Activated naive CD4-positive, alpha-beta T cell treated with anti-CD3 and anti-CD28 coated beads for 36 hours (primary cell): ENCODE measurements at regions of chr11 and their contacts with region 1.

Region 1: DNA sequence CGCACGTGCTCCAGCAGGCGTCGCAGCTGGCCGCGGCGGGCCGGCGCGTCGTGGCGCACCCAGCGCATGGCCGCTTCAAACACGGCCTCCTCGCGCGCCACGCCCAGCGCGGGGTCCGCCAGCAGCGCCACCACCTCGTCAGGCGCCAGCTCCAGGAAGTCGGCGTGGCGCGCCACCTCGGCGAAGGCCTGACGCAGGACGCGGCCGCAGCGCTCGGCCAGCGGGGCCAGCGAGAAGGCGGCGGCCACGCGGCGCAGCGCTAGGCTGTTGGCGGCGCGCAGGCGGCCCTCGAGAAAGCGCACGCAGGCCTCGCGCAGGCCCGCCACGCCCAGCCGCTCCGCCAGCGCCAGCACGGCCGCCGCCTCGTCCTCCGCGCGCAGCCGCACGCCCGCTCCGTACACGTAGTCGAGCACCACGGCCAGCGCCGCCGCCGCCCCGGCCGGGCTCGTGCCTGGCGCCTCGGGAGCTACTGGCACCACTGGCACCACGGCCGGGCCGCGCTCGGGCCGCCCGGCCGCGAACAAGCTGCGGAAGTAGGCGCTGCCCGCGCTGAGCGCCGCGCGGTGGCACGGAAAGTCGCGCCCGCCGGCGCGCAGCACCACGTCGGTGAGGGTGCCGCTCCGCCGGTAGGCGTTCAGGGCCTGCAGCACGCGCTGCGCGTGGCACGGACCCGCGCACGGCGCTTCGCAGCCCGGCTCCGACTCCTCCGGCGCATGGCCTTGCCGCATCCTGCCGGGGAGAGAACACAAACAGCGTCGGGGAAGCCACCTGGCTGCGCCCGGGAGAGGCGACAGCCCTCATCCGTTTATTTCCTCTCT is 2.9 kb downstream of the KLHL35 start:
- DNase-seq: peak; percentile 46
- H3K4me3 Mint-ChIP-seq: peak overlapping the region; percentile 67
- H3K27ac Mint-ChIP-seq: no peak overlapping the region
- H3K4me1 Mint-ChIP-seq: peaks cover 13% of the 10 kb centered on the region
- H3K27me3 Mint-ChIP-seq: peaks cover 42% of the 10 kb centered on the region

Region 2: GRCh38 chr11:75399344-75400145 is 30.6 kb before region 1 on chr11 and contains the start of gene RPS3:
- CTCF ChIA-PET with region 1: no interaction called
- intact Hi-C with region 1: loop called (anchors 5 kb)
- DNase-seq: peak; percentile 90
- H3K4me3 Mint-ChIP-seq: peak within 1 kb of the TSS; percentile 92
- H3K27ac Mint-ChIP-seq: peak within 1 kb of the TSS; percentile 92
- H3K4me1 Mint-ChIP-seq: peaks cover 44% of the 10 kb centered on the region
- H3K27me3 Mint-ChIP-seq: no peaks in the 10 kb centered on the region
- total RNA-seq, gene RPS3: 5,069 to 5,116 TPM

Region 3: GRCh38 chr11:75639762-75640181 is 209.7 kb after region 1 on chr11:
- CTCF ChIA-PET with region 1: no interaction called
- intact Hi-C with region 1: no loop called
- DNase-seq: no peak
- H3K4me3 Mint-ChIP-seq: no peak overlapping the region
- H3K27ac Mint-ChIP-seq: no peak overlapping the region
- H3K4me1 Mint-ChIP-seq: no peaks in the 10 kb centered on the region
- H3K27me3 Mint-ChIP-seq: peaks cover 22% of the 10 kb centered on the region